B cell (primary cell): ENCODE measurements at regions of chr11 and their contacts with region 1.

Region 1: GRCh38 chr11:125625630-125626287 is 796 bp downstream of the CHEK1 start:
- DNase-seq: peak; percentile 90
- ATAC-seq: peak; percentile 90
- H3K4me3 ChIP-seq: peak overlapping the region; percentile 81 to 96 (median 94)
- H3K4me3 Mint-ChIP-seq: peak overlapping the region; percentile 95
- H3K27ac ChIP-seq: peak overlapping the region; percentile 97 to 98
- H3K27ac Mint-ChIP-seq: peak overlapping the region; percentile 98
- H3K4me1 ChIP-seq: peaks cover 11 to 18% of the 10 kb centered on the region in 2 donors
- H3K4me1 Mint-ChIP-seq: peaks cover 14% of the 10 kb centered on the region
- H3K27me3 ChIP-seq: no peaks in the 10 kb centered on the region
- H3K27me3 Mint-ChIP-seq: no peaks in the 10 kb centered on the region
- CTCF ChIP-seq: no peak

Region 2: DNA sequence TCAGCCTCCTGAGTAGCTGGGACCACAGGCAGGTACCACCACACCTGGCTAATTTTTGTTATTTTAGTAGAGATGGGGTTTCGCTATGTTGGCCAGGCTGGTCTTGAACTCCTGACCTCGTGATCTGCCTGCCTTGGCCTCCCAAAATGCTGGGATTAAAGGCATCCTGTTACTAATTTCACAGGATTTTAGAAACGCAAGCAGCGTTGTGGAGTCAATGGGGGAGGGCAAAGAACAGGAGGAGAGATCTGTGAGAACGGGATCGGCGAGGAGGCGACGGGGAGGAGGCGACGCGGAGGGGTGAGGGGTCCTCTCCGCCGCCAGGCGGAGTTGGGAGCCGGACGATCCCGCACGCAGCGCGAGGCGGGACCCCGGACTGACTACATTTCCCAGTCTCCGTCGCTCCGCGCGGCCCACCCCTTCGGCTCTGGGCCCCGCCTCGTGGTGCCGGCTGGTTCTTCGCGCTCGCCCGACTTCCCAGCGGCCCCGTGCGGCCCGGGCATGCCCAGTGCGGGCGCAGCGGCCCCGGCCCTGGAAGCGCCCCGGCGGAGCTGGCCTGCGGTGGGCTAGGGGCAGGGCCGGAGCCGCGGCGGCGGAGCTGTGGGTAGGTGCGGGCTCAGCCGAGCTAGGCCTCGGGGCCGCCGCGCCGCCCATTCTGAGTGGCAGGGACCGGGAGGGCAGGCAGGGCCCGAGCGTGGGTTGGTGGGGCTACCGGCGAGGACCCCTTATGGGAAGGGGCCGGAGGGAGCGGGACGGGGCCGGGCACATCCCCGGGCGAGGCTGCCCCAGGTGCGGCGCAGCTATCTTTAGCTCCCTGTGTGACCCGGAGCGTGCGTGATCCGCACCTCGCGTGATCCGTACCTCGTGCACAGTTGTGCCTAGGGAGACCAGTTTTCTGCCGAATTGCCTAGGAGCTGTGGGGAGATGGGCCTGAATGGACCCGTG is 56.5 kb before region 1 on chr11 and contains the start of gene EI24:
- CTCF ChIA-PET with region 1: interaction called, 4 read pairs
- POLR2A ChIA-PET with region 1: interaction called, 8 read pairs
- intact Hi-C with region 1: loop called (anchors 1 kb)
- DNase-seq: peak; percentile 93
- ATAC-seq: peak; percentile 99
- H3K4me3 ChIP-seq: peak within 1 kb of the TSS; percentile 68 to 91 (median 80)
- H3K4me3 Mint-ChIP-seq: peak within 1 kb of the TSS; percentile 96
- H3K27ac ChIP-seq: peak within 1 kb of the TSS; percentile 52 to 86
- H3K27ac Mint-ChIP-seq: peak within 1 kb of the TSS; percentile 91
- H3K4me1 ChIP-seq: peaks cover 11 to 16% of the 10 kb centered on the region in 2 donors
- H3K4me1 Mint-ChIP-seq: peaks cover 18% of the 10 kb centered on the region
- H3K27me3 ChIP-seq: no peaks in the 10 kb centered on the region
- H3K27me3 Mint-ChIP-seq: no peaks in the 10 kb centered on the region
- CTCF ChIP-seq: peak; percentile 68
- total RNA-seq, gene EI24: 20.2 and 21.9 TPM in 2 replicates

Region 3: GRCh38 chr11:125772834-125773505 is 147.2 kb after region 1 on chr11:
- CTCF ChIA-PET with region 1: no interaction called
- POLR2A ChIA-PET with region 1: no interaction called
- intact Hi-C with region 1: no loop called
- DNase-seq: no peak
- ATAC-seq: no peak
- H3K4me3 ChIP-seq: no peak overlapping the region
- H3K4me3 Mint-ChIP-seq: no peak overlapping the region
- H3K27ac ChIP-seq: no peak overlapping the region
- H3K27ac Mint-ChIP-seq: no peak overlapping the region
- H3K4me1 ChIP-seq: no peaks in the 10 kb centered on the region
- H3K4me1 Mint-ChIP-seq: no peaks in the 10 kb centered on the region
- H3K27me3 ChIP-seq: no peaks in the 10 kb centered on the region
- H3K27me3 Mint-ChIP-seq: peaks cover 16% of the 10 kb centered on the region
- CTCF ChIP-seq: no peak

Region 4: GRCh38 chr11:125874556-125875124 is 248.9 kb after region 1 on chr11:
- CTCF ChIA-PET with region 1: interaction called, 4 read pairs
- POLR2A ChIA-PET with region 1: no interaction called
- intact Hi-C with region 1: loop called (anchors 1 kb)
- DNase-seq: peak; percentile 63
- ATAC-seq: peak; percentile 49
- H3K4me3 ChIP-seq: no peak overlapping the region
- H3K4me3 Mint-ChIP-seq: no peak overlapping the region
- H3K27ac ChIP-seq: no peak overlapping the region
- H3K27ac Mint-ChIP-seq: no peak overlapping the region
- H3K4me1 ChIP-seq: peaks cover 0 to 3% of the 10 kb centered on the region in 2 donors
- H3K4me1 Mint-ChIP-seq: peaks cover 10% of the 10 kb centered on the region
- H3K27me3 ChIP-seq: no peaks in the 10 kb centered on the region
- H3K27me3 Mint-ChIP-seq: no peaks in the 10 kb centered on the region
- CTCF ChIP-seq: peak; percentile 74

Region 5: DNA sequence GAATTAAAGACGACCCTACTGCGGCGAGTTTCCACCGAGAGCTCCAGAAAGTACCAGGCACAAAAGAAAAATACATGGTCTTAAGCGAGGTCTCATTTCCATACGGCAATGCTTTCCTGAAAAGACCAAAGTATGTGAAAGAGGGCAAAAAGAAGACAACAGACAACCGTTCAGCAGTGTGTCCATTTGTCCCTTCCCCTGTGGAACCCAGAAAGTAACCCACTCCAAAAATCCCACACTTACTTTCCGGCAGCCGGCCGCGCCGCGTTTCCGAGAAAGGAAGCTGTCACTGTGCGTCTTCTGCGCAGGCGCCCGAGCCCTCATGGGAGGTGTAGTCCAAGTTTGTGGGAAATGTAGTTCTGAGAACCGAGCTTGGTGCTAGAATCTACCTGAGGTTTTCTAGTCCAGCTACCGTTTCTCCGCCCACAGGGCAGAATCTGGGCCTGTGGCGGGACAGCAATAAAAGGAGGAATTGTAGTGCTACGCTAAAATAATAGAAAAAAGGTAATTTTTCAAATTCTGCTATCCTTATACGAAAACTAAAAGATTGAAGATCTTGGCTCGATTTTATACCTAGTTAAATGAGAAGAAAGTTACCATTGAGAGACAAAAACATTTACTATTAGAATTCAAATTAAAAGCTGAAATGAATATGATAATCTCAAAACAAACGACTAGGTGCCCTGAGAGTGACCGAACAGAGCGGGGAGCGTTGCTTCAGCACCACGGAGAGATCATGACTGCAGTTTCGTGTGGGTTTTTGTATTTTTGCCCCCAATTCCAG is 277.4 kb after region 1 on chr11 and contains the start of gene PUS3:
- CTCF ChIA-PET with region 1: no interaction called
- POLR2A ChIA-PET with region 1: interaction called, 3 read pairs
- intact Hi-C with region 1: loop called (anchors 1 kb)
- DNase-seq: peak; percentile 89
- ATAC-seq: peak; percentile 96
- H3K4me3 ChIP-seq: peak within 1 kb of the TSS; percentile 67 to 98 (median 81)
- H3K4me3 Mint-ChIP-seq: peak within 1 kb of the TSS; percentile 97
- H3K27ac ChIP-seq: peak within 1 kb of the TSS; percentile 45 to 75
- H3K27ac Mint-ChIP-seq: peak within 1 kb of the TSS; percentile 82
- H3K4me1 ChIP-seq: peaks cover 23 to 26% of the 10 kb centered on the region in 2 donors
- H3K4me1 Mint-ChIP-seq: peaks cover 24% of the 10 kb centered on the region
- H3K27me3 ChIP-seq: peaks cover 0 to 25% (median 18%) of the 10 kb centered on the region in 4 experiments
- H3K27me3 Mint-ChIP-seq: peaks cover 32% of the 10 kb centered on the region
- CTCF ChIP-seq: no peak
- total RNA-seq, gene PUS3: 7.8 and 8.1 TPM in 2 replicates